Posterior vena cava (tissue), 2 donors: ENCODE measurements at regions of chr9 and their contacts with region 1.

Region 1: DNA sequence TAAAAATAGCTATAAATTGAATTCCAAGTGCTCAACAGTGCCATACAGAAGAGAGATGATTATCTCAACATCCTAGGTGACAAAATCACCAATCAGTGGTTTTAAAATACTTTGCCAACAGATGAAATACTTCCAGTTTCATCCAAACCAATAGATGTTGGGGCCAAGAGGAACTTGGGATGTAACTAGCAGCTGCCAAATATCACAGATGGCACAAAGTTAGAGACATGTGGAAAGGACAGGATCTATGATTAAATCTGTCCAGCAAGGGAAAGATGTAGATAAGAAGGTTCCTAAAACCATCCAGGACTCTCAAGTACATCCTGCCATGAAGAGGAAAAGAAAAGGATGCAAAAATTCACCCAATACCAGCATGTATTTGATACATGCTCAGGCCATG is 23.8 kb downstream of the TRPM3 start:
- DNase-seq: no peak

Region 2: DNA sequence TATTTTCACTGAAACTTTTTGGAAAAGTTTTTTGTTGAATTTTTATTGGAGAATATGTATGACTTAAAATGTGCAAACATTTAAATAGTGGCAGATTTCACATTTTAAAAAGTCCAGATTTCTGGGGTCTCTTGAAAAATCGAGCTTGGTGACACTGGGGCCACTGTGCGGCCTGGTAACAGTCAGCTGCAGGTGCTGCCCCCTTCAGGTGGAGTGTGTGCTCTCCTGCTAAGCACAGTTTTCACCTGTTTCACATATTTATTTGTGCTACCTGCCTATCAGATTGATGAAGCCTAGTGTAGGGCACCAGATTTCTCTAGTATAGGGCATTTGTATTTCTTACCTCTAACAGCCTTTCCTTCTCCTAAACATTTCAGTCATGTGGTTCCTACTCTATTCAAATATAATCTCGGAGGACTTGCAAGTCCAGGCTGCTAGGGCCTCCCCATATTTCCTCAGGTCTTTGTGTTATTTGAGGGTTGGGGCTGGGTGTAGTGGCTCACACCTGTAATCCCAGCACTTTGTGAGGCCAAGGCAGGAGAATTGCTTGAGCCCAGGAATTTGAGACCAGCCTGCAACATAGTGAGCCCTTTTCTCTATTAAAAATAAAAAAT is 587.4 kb before region 1 on chr9:
- intact Hi-C with region 1: no loop called
- DNase-seq: no peak

Region 3: DNA sequence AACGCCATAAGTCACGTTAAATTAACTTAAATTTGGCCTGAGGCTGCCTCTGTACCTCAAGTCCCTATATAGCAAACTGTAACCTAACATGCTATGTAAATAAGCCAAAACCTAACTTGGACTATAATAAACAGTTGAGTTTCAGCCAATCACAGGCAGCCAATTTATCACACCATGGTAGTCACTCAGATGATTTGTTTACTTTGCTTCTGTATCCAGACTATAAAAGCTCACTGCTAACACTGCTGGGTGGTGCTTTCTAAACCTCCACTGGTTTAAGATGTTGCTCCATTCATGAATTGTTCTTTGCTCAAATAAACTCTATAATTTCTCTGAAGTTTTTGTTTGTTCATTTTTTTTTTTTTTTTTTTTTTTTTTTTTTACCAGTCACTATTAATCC is 39.0 kb before region 1 on chr9:
- intact Hi-C with region 1: loop called in 1 of 2 experiments (anchors 2 kb)
- DNase-seq: no peak

Region 4: GRCh38 chr9:71270554-71270953 is 172.9 kb after region 1 on chr9:
- intact Hi-C with region 1: no loop called
- DNase-seq: no peak